HepG2 (cell line): ENCODE measurements at regions of chr2 and their contacts with region 1.

Region 1: DNA sequence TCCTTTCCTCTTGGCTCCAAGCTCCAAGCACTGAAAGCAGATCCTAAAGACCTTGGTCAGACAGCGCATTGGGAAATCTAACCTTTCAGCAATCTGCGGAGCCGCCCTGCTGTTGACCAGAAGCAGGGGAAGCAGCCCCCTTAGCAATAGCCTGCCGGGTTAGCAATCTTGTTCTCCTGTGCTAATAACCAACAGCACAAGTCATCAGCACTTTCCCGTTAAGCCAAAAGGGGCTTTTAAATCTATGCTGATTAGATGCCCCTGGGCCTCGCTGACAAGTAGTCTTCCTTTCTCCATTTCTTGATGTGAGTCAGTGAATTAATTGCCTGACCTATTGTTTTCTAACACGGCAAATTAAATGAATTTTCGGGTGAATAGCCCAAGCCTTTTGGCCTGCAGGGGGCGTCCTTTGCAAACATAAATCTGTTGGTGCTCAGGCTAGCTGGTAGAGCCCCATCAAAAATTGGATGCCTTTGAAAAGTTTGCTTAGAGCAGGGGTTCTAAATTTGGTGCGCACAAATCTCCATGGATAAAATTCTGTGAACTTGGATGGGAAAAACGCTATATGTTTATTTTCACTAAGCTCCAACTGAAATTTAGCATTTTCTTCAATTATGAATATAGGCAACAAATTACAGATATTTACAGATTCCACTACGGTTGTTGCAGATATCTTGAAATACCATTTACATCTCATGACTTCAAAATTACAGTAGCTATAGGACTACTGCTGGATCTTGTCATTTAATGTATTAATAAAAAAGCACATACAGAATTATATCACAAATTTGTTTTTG is 24.6 kb downstream of the MAIP1 start:
- DNase-seq: peak; percentile 67
- ATAC-seq: peak; percentile 87
- H3K4me3 ChIP-seq: peak overlapping the region; percentile 33 to 36 (median 34); a peak in 3 of 6 replicates
- H3K27ac ChIP-seq: no peak overlapping the region
- H3K4me1 ChIP-seq: peaks cover 29% of the 10 kb centered on the region
- H3K27me3 ChIP-seq: no peaks in the 10 kb centered on the region
- CTCF ChIP-seq: peak; percentile 91
- EP300 ChIP-seq: no peak
- POLR2A ChIP-seq: no peak
- RAD21 ChIP-seq: peak; percentile 83

Region 2: DNA sequence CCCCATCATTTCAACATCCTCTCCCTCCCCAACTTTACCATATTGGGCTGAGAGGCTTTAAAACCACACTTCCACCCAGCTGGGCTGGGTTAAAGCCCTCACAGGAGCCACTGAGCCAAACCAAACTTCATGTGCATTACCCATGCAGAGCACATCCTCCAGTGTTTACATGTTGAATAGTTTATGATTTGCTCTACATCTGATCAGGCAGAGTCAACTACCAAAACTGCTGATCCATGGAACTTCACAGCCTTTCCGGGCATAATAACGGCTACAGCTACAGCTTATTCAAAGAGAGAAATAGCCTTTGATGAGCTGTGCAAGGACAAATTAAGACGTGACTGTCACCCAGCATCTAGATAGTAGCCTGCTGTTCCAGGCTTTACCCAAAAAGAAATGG is 14.3 kb after region 1 on chr2:
- CTCF ChIA-PET with region 1: no interaction called
- POLR2A ChIA-PET with region 1: no interaction called
- in situ Hi-C with region 1: no loop called
- intact Hi-C with region 1: no loop called
- DNase-seq: no peak
- ATAC-seq: no peak
- H3K4me3 ChIP-seq: no peak overlapping the region
- H3K27ac ChIP-seq: no peak overlapping the region
- H3K4me1 ChIP-seq: peaks cover 9% of the 10 kb centered on the region; the same call in 1 of the 2 replicates
- H3K27me3 ChIP-seq: peaks cover 0 to 5% of the 10 kb centered on the region in 2 experiments; a peak in 2 of 5 replicates
- CTCF ChIP-seq: no peak
- EP300 ChIP-seq: no peak
- POLR2A ChIP-seq: no peak
- RAD21 ChIP-seq: no peak

Region 3: DNA sequence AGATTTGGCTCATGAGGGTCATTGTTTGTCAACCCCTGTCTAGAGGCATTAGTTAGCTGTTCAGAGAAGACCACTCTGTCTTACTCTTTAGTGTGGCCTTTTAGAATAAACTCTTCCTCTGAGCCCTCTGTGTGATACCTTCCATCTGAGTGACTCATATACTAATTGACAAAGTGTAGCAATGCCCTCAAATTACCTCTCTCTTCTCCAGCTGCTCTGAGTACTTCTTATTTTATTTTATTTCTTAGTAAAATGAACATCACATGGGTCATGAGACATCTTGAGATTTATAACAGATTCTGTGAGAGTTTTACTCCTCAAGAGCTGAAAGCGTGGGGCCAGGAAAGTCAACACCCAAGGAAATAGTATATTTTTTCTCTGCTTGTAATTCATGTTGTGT is 462.4 kb after region 1 on chr2:
- CTCF ChIA-PET with region 1: no interaction called
- POLR2A ChIA-PET with region 1: no interaction called
- in situ Hi-C with region 1: no loop called
- intact Hi-C with region 1: no loop called
- DNase-seq: no peak
- ATAC-seq: no peak
- H3K4me3 ChIP-seq: no peak overlapping the region
- H3K27ac ChIP-seq: no peak overlapping the region
- H3K4me1 ChIP-seq: no peaks in the 10 kb centered on the region
- H3K27me3 ChIP-seq: no peaks in the 10 kb centered on the region
- CTCF ChIP-seq: no peak
- EP300 ChIP-seq: no peak
- POLR2A ChIP-seq: no peak
- RAD21 ChIP-seq: no peak

Region 4: GRCh38 chr2:200483729-200484198 is 503.7 kb after region 1 on chr2:
- CTCF ChIA-PET with region 1: interaction called, 5 read pairs
- POLR2A ChIA-PET with region 1: interaction called, 3 read pairs
- in situ Hi-C with region 1: loop called (anchors 10 kb)
- intact Hi-C with region 1: loop called (anchors 2 kb)
- DNase-seq: peak; percentile 64
- ATAC-seq: peak; percentile 86
- H3K4me3 ChIP-seq: no peak overlapping the region
- H3K27ac ChIP-seq: no peak overlapping the region
- H3K4me1 ChIP-seq: peaks cover 68% of the 10 kb centered on the region
- H3K27me3 ChIP-seq: no peaks in the 10 kb centered on the region
- CTCF ChIP-seq: peak; percentile 90
- EP300 ChIP-seq: 0 out of 4 replicates have a peak, but pooled peaks of 1 of the 2 experiments have one; percentile 30
- POLR2A ChIP-seq: peak in 1 of 2 experiments; percentile 45; a peak in 2 of 4 replicates
- RAD21 ChIP-seq: peak; percentile 62

Region 5: GRCh38 chr2:200695191-200695590 is 715.2 kb after region 1 on chr2:
- CTCF ChIA-PET with region 1: no interaction called
- POLR2A ChIA-PET with region 1: no interaction called
- in situ Hi-C with region 1: loop called (anchors 10 kb)
- intact Hi-C with region 1: no loop called
- DNase-seq: no peak
- ATAC-seq: peak; percentile 59
- H3K4me3 ChIP-seq: no peak overlapping the region
- H3K27ac ChIP-seq: no peak overlapping the region
- H3K4me1 ChIP-seq: peaks cover 6% of the 10 kb centered on the region; the same call in 1 of the 2 replicates
- H3K27me3 ChIP-seq: peaks cover 0 to 6% of the 10 kb centered on the region in 2 experiments; a peak in 1 of 5 replicates
- CTCF ChIP-seq: no peak
- EP300 ChIP-seq: no peak
- POLR2A ChIP-seq: no peak
- RAD21 ChIP-seq: no peak